ENCODE measurements at regions of chr1 and their contacts with region 1.

Region 1: DNA sequence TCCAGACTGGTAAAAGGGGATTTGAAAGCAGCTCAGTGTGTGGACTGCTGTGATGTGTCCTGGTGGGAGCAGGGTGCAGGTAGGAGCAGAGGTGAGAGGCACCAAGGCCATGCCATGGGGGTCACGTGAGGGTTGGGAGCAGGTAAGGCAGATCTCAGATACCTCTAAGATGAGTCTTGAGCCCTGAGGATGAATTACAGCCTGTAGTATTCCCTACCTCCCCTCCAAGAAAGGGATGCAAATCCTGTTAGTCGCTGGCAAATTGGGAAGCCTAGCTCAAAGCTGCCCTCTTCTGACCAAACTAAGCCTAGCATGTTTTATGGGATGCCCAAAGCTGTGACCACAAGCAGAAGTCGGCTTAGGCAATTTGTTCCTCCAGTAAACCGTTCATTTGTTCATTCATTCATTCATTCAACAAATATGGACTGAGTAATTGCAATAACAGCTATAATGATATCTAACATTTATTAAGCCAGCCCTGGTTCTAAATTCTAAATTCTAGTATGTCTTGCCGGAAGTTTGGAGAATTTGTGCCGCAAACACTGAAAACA is 3.9 kb upstream of the NUAK2 start:
- DNase-seq: peak in 1 of 2 donors; percentile 71
- H3K4me3 ChIP-seq: no peak overlapping the region
- CTCF ChIP-seq: no peak
- POLR2A ChIP-seq: no peak

Region 2: DNA sequence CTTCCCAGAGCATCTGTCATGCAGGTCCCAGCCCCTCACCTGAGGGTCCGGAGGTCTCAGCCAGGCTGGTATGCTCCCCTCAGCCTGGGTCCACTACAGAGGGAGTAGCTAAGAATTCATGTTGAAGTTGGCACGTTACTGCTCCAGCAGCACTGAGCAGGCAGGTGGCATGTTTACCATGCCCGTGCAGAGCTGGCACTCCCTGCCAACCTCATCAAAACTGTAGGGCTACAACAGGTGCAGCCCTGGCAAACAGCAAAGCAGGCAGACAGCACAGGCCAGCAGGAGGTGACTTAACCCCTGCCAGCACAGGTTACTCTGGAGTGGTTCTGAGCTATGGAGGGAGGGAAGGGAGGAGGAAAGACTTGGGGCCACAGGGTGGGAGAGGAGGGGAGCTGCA is 50.3 kb before region 1 on chr1:
- intact Hi-C with region 1: loop called (anchors 2 kb)
- DNase-seq: no peak
- H3K4me3 ChIP-seq: no peak overlapping the region
- CTCF ChIP-seq: no peak
- POLR2A ChIP-seq: no peak

Region 3: DNA sequence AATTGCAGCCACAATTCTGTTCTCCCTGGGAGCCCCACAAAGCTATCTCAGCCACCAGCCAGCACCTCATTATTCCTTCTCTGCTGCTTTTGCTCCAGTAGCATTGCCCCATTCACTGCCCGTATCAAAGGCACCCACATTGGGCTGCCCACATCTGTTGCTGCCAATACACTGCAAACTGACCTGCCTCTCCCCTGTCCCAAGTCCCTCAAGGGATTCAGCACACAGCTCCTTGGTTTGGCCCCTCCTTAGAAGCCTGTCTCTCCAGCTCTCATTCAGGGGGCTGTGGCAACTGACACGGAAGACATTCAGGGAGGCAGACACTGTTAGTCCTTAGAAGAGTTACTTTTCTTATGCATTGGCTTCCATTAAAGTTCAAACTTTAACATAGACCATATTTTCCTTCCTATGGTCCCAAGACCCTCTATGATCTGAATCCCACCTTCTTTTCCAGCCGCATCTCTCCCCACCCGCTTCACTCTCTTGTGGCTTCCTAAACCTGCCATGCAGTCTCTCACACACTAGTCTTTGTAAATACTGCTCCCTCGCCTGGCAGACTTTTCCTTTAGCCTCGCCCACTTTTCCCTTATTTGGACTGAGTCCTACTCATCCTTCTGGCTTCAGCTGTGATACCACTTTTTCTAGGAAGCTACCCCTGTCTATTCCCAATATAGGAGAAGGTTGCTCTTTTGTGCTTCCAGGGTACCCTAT is 50.6 kb after region 1 on chr1:
- intact Hi-C with region 1: no loop called
- DNase-seq: peak in 1 of 2 donors; percentile 40
- H3K4me3 ChIP-seq: no peak overlapping the region
- CTCF ChIP-seq: no peak
- POLR2A ChIP-seq: no peak